ENCODE measurements at regions of chr9 and their contacts with region 1.

Region 1: GRCh38 chr9:71249729-71250317 is 128.4 kb upstream of the TRPM3 start:
- DNase-seq: peak; percentile 78
- H3K4me3 ChIP-seq: no peak overlapping the region
- H3K27ac ChIP-seq: no peak overlapping the region
- H3K4me1 ChIP-seq: no peaks in the 10 kb centered on the region
- H3K27me3 ChIP-seq: peaks cover 4 to 9% of the 10 kb centered on the region in 2 experiments
- CTCF ChIP-seq: peak; percentile 69
- POLR2A ChIP-seq: no peak

Region 2: DNA sequence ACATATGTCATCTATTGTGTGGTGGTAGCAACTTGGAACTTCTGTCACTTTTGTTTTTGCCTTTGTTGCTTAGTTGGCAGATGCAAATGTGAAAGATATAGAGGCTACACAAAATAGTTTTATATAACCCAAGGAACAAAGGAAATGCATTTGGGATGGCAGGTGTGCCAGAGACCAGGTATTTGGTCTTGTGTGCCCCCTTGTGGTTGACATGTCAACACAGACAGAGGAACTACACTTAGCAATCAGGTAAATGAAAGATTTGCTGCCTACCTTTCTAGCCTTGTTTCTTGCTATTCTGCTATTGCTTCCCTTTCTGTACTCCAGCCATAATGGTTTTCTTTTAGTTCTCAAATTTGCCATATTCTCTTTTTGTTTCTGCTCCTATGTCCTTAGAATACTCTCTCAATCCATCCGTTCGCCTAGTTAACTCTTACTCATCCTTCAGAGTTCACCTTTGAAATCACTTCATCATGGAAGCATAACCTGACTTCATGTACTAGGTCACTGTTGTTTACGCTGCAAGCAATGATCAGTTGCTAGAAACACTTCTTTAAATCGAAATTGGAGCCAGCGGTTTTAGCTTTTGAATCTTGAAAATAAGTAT is 247.9 kb before region 1 on chr9:
- CTCF ChIA-PET with region 1: interaction called, 23 read pairs
- POLR2A ChIA-PET with region 1: no interaction called
- dilution Hi-C with region 1: no loop called
- intact Hi-C with region 1: loop called (anchors 1 kb)
- DNase-seq: peak; percentile 26
- H3K4me3 ChIP-seq: no peak overlapping the region
- H3K27ac ChIP-seq: no peak overlapping the region
- H3K4me1 ChIP-seq: no peaks in the 10 kb centered on the region
- H3K27me3 ChIP-seq: no peaks in the 10 kb centered on the region
- CTCF ChIP-seq: peak; percentile 26 to 51
- POLR2A ChIP-seq: no peak

Region 3: DNA sequence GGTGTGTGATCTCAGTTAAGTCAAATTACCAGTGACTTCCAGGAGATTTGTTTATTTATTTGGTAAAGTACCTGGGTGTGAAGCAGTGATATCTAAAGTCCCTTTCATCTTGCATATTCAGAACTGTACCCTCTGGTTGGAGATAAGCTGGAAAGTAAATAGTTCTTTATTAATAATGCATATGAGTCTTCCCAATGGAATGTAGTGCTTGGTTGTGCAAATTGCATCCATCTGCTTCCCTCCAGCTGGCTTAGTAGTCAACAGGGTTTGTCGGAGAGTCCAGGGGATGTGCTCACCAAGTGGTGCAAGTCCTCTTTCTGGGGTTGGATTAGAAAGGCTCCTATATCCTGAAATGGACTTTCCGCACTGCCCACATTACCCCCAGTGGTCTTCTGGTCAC is 170.4 kb before region 1 on chr9:
- CTCF ChIA-PET with region 1: no interaction called
- POLR2A ChIA-PET with region 1: no interaction called
- dilution Hi-C with region 1: no loop called
- intact Hi-C with region 1: loop called (anchors 10 kb)
- DNase-seq: no peak
- H3K4me3 ChIP-seq: no peak overlapping the region
- H3K27ac ChIP-seq: no peak overlapping the region
- H3K4me1 ChIP-seq: no peaks in the 10 kb centered on the region
- H3K27me3 ChIP-seq: no peaks in the 10 kb centered on the region
- CTCF ChIP-seq: no peak
- POLR2A ChIP-seq: no peak